Right ventricle myocardium inferior (tissue), 1 donor: ENCODE measurements at regions of chrX and their contacts with region 1.

Region 1: DNA sequence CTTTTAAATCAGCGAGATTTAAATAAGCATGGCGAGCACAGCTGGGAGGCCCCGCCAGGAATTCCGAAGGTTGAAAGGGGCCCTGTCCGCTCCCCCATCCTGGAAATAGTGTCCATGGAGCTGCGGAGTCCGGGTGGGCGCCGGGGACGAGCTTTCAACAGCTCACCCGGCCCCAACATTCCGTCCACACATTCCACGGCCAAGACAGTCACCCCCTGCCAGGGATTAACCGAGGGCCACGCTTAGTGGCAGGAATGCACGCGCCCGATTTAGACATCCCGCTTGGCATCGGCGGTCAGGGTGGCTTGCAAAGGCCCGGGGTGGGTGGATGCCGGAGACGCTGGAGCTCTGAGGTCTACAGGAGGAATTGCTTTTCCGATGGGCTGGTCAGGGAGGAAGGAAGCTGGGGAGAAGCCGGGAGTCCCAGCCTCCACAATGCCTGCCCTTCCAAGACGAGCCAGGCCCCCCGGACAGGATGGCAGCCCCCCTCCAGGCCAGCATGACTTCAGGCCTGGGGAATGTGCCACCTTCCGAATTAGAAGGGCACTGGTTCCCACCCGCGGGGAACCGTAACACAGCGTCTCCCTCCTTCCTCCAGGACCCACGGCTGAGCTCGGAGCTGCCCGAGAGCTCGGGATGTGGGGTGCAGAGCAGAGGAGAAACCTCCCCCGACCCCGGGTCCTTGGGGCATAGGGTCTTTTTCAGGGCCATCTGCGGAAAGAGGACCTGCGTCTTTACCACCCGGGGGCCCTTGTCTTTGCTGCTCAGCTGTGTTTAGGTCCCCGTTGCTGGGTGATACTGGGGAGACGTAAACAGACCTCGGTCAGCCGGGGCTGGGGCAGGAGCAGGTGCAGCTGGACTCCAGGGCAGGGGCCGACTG is 26.9 kb upstream of the PPP2R3B start:
- DNase-seq: peak; percentile 89
- ATAC-seq: peak; percentile 93

Region 2: DNA sequence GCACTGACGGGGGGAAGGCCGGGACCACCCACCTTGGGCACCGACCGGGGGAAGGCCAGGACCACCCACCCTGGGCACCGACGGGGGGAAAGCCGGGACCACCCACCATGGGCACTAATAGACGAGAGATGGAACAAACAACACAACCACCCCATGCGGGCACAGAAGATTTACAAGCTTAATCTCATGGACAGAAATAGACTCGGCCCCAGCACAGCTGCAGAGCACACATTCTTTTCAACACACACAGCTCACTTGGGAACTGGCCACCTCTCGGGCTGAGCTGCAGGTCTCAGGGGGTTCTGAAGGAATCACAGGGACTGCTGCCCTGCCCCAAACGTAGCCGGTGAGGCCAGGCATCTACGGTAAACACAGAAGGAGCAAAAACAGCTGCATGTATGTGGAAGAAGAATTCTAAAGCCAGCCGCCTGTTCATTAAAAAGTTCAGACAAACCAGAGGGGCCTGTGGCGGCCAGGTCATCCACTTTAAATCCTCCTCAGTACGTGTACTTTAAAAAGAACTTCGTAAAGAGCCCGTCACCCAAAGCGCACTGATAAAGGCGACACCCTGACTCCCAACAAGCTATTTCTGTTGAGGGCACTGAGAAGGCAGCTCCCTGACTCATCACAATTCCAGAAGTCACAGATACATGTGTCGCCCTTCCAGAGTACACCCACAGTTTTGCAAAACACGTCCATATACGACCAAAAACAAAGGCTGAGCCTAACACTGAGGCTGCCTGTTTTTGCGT is 44.6 kb before region 1 on chrX:
- intact Hi-C with region 1: loop called (anchors 2 kb)
- DNase-seq: peak; percentile 66
- ATAC-seq: peak; percentile 76